Vagina (tissue), 2 donors: ENCODE measurements at regions of chr1 and their contacts with region 1.

Region 1: DNA sequence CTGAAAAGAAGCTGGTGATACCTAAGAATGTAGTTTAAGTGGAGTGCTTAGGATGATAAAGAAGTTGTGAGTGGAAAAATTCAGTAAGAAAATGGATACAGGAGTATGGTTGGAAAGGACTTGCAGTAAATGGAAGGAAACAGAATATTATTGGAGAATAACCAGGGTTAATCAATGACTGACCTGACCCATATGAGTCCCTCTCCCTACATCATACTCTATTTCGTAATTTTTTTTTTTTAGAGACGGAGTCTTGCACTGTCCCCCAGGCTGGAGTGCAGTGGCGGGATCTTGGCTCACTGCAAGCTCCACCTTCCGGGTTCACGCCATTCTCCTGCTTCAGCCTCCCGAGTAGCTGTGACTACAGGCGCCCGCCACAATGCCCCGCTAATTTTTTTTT is 33.4 kb upstream of the ENSA start:
- DNase-seq: no peak
- H3K4me3 ChIP-seq: no peak overlapping the region
- H3K27ac ChIP-seq: no peak overlapping the region
- H3K4me1 ChIP-seq: peaks cover 1% of the 10 kb centered on the region
- H3K27me3 ChIP-seq: no peaks in the 10 kb centered on the region
- CTCF ChIP-seq: no peak
- POLR2A ChIP-seq: no peak

Region 2: DNA sequence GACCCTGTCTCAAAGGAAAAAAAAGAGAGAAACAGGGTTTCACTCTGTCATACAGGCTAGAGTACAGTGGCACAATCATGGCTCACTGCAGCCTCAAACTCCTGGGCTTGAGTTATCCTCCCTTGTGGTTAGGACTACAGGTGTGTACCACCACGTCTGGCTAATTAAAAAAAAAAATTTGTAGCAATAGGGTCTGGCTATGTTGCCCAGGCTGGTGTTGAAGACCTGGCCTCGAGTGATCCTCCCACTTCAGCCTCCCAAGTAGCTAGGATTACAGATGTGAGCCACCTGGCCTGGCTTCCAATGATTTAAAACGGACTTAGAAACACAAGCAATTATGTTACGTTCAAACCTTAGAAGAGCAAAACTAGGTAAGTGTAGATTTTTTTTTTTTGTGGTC is 12.1 kb after region 1 on chr1:
- intact Hi-C with region 1: no loop called
- DNase-seq: no peak
- H3K4me3 ChIP-seq: no peak overlapping the region
- H3K27ac ChIP-seq: no peak overlapping the region
- H3K4me1 ChIP-seq: no peaks in the 10 kb centered on the region
- H3K27me3 ChIP-seq: no peaks in the 10 kb centered on the region
- CTCF ChIP-seq: no peak
- POLR2A ChIP-seq: no peak

Region 3: DNA sequence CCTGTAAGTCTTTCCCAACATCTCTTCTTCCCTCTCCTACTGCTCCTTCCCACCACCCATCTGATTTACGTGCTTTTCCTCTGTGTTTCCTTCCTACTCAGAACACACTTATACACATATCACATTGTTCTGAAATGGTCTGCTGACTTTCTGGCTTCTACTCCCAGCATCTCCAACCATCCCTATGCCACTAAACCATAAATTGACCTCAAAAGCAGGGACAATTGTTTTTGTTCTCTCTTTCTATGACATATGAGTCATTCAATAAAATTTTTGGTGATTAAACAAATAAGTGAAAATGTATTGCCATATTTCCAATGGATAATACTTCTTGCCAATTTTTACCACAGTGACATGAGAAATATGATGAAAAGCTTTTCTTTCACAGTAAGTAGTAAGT is 26.0 kb after region 1 on chr1:
- intact Hi-C with region 1: loop called (anchors 1 kb)
- DNase-seq: no peak
- H3K4me3 ChIP-seq: no peak overlapping the region
- H3K27ac ChIP-seq: no peak overlapping the region
- H3K4me1 ChIP-seq: peaks cover 7% of the 10 kb centered on the region
- H3K27me3 ChIP-seq: no peaks in the 10 kb centered on the region
- CTCF ChIP-seq: no peak
- POLR2A ChIP-seq: no peak

Region 4: DNA sequence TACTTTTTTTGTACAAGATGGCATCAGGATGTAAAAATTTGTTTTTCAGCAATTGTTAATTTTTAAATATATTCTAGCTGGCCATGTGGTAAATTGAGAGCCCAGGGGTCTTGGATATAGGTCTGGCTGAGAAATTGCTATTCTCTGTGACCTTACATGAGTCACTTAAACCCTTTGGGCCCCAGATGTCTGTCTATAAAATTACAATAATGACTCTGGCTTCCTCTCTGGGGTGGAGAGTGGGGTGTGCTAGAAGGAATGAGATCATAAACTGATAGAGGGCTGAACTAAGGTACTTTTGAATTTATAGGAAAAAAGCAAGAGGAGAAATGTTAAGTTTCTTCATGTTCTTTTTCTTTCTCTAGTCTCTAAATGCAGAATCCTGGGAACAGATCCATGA is 1464.9 kb after region 1 on chr1:
- intact Hi-C with region 1: no loop called
- DNase-seq: no peak
- H3K4me3 ChIP-seq: no peak overlapping the region
- H3K27ac ChIP-seq: no peak overlapping the region
- H3K4me1 ChIP-seq: no peaks in the 10 kb centered on the region
- H3K27me3 ChIP-seq: no peaks in the 10 kb centered on the region
- CTCF ChIP-seq: no peak
- POLR2A ChIP-seq: no peak